ENCODE measurements at regions of chr5 and their contacts with region 1.

Region 1: GRCh38 chr5:112419986-112420864 is 1.1 kb upstream of the EPB41L4A start:
- DNase-seq: peak; percentile 70
- H3K4me3 Mint-ChIP-seq: peak overlapping the region; percentile 77
- H3K27ac Mint-ChIP-seq: no peak overlapping the region
- H3K4me1 Mint-ChIP-seq: no peaks in the 10 kb centered on the region
- H3K27me3 Mint-ChIP-seq: no peaks in the 10 kb centered on the region
- CTCF ChIP-seq: peak; percentile 91

Region 2: GRCh38 chr5:112174959-112175594 is 245.1 kb before region 1 on chr5:
- CTCF ChIA-PET with region 1: interaction called, 178 read pairs
- POLR2A ChIA-PET with region 1: interaction called, 40 read pairs
- intact Hi-C with region 1: loop called (anchors 1 kb)
- DNase-seq: peak; percentile 71
- H3K4me3 Mint-ChIP-seq: no peak overlapping the region
- H3K27ac Mint-ChIP-seq: no peak overlapping the region
- H3K4me1 Mint-ChIP-seq: no peaks in the 10 kb centered on the region
- H3K27me3 Mint-ChIP-seq: no peaks in the 10 kb centered on the region
- CTCF ChIP-seq: peak; percentile 79

Region 3: DNA sequence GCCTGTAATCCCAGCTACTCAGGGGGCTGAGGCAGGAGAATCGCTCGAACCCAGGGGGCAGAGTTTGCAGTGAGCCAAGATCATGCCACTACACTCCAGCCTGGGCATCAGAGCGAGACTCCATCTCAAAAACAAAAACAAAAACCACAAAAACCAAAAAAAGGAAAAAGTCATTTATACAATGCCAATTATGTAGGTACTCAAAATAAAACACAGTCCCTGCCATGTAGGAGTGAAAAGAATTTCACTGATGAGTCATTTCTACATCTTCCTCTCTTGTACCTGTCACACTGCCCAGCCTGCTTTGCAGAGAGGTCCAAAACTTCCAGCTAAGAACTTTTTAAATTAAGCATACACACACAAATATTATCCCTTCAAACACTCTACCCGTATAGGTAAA is 217.0 kb before region 1 on chr5:
- CTCF ChIA-PET with region 1: interaction called, 27 read pairs
- POLR2A ChIA-PET with region 1: interaction called, 24 read pairs
- intact Hi-C with region 1: no loop called
- DNase-seq: no peak
- H3K4me3 Mint-ChIP-seq: no peak overlapping the region
- H3K27ac Mint-ChIP-seq: no peak overlapping the region
- H3K4me1 Mint-ChIP-seq: peaks cover 10% of the 10 kb centered on the region
- H3K27me3 Mint-ChIP-seq: no peaks in the 10 kb centered on the region
- CTCF ChIP-seq: no peak

Region 4: DNA sequence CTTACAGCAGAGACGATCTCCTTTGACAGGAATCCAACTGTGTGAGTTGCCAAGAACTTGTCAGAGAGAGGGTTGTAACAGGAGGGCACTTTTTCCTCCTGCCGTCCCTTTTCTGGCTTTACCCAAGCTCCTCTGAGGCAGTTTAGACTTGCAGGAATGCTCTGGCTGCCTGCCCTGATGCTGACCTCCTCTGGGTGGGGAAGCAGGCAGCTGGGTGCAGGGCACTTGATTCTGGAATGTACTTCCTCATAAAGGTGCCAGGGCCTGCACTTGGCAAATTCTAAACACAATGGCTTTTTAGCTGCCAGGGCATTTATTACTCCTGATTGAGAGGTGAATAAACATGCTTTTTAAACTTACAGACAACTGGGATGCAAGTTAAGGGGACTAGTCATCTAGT is 191.6 kb before region 1 on chr5:
- CTCF ChIA-PET with region 1: interaction called, 39 read pairs
- POLR2A ChIA-PET with region 1: interaction called, 97 read pairs
- intact Hi-C with region 1: no loop called
- DNase-seq: peak; percentile 87
- H3K4me3 Mint-ChIP-seq: no peak overlapping the region
- H3K27ac Mint-ChIP-seq: peak overlapping the region; percentile 80
- H3K4me1 Mint-ChIP-seq: peaks cover 25% of the 10 kb centered on the region
- H3K27me3 Mint-ChIP-seq: no peaks in the 10 kb centered on the region
- CTCF ChIP-seq: no peak

Region 5: DNA sequence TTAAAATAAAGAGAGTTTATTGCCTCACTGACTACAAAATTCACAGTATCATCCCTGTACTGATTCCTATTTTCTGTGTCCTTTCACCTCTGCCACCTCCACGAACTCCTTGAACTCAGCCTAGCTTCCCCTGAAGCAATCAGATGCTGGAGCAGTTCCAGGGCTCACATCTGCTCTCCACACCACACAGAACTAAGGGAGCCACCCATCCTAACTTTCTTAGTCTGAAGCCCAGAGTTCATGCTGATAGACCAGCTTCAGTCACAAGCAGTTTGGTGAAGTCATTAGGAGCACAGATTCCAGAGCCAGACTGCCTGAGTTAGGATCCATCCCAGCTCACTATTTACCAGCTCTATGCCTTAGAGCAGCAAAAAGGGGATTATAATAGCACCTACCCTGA is 14.4 kb after region 1 on chr5:
- CTCF ChIA-PET with region 1: interaction called, 31 read pairs
- POLR2A ChIA-PET with region 1: interaction called, 12 read pairs
- intact Hi-C with region 1: no loop called
- DNase-seq: peak; percentile 25
- H3K4me3 Mint-ChIP-seq: no peak overlapping the region
- H3K27ac Mint-ChIP-seq: no peak overlapping the region
- H3K4me1 Mint-ChIP-seq: peaks cover 7% of the 10 kb centered on the region
- H3K27me3 Mint-ChIP-seq: peaks cover 17% of the 10 kb centered on the region
- CTCF ChIP-seq: no peak

Region 6: GRCh38 chr5:112529525-112529924 is 109.3 kb after region 1 on chr5:
- CTCF ChIA-PET with region 1: interaction called, 11 read pairs
- POLR2A ChIA-PET with region 1: interaction called, 5 read pairs
- intact Hi-C with region 1: no loop called
- DNase-seq: peak; percentile 45
- H3K4me3 Mint-ChIP-seq: no peak overlapping the region
- H3K27ac Mint-ChIP-seq: no peak overlapping the region
- H3K4me1 Mint-ChIP-seq: no peaks in the 10 kb centered on the region
- H3K27me3 Mint-ChIP-seq: no peaks in the 10 kb centered on the region
- CTCF ChIP-seq: peak; percentile 26

Region 7: GRCh38 chr5:112630246-112631009 is 210.2 kb after region 1 on chr5:
- CTCF ChIA-PET with region 1: no interaction called
- POLR2A ChIA-PET with region 1: no interaction called
- intact Hi-C with region 1: no loop called
- DNase-seq: peak; percentile 56
- H3K4me3 Mint-ChIP-seq: no peak overlapping the region
- H3K27ac Mint-ChIP-seq: no peak overlapping the region
- H3K4me1 Mint-ChIP-seq: no peaks in the 10 kb centered on the region
- H3K27me3 Mint-ChIP-seq: peaks cover 27% of the 10 kb centered on the region
- CTCF ChIP-seq: no peak